ENCODE measurements at regions of chr2 and their contacts with region 1.

Region 1: GRCh38 chr2:3780477-3781402 is 77.4 kb downstream of the DCDC2C start:
- DNase-seq: peak; percentile 87
- H3K4me3 Mint-ChIP-seq: peak overlapping the region; percentile 38
- H3K27ac Mint-ChIP-seq: no peak overlapping the region
- H3K4me1 Mint-ChIP-seq: peaks cover 12% of the 10 kb centered on the region
- H3K27me3 Mint-ChIP-seq: peaks cover 33% of the 10 kb centered on the region

Region 2: DNA sequence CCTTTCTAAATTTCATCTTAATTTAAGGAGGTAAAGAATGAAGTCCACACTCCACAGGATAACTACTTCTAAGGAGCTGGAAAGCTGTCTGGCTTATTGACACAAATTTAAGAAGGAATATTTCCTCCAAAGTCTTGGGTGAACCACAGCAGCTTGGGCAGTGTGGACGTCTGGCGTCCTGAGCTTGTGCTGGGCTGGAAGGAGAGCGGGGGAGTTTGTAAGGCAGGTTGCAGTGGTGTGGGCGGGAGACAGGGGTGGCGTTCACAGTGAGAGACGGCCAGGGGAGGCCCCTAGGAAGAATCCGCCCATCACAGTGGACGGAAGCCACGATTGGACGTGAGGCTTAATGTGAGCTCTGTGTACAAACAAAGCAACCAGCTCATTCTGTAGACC is 287.1 kb before region 1 on chr2:
- CTCF ChIA-PET with region 1: no interaction called
- intact Hi-C with region 1: no loop called
- DNase-seq: no peak
- H3K4me3 Mint-ChIP-seq: no peak overlapping the region
- H3K27ac Mint-ChIP-seq: no peak overlapping the region
- H3K4me1 Mint-ChIP-seq: no peaks in the 10 kb centered on the region
- H3K27me3 Mint-ChIP-seq: no peaks in the 10 kb centered on the region

Region 3: DNA sequence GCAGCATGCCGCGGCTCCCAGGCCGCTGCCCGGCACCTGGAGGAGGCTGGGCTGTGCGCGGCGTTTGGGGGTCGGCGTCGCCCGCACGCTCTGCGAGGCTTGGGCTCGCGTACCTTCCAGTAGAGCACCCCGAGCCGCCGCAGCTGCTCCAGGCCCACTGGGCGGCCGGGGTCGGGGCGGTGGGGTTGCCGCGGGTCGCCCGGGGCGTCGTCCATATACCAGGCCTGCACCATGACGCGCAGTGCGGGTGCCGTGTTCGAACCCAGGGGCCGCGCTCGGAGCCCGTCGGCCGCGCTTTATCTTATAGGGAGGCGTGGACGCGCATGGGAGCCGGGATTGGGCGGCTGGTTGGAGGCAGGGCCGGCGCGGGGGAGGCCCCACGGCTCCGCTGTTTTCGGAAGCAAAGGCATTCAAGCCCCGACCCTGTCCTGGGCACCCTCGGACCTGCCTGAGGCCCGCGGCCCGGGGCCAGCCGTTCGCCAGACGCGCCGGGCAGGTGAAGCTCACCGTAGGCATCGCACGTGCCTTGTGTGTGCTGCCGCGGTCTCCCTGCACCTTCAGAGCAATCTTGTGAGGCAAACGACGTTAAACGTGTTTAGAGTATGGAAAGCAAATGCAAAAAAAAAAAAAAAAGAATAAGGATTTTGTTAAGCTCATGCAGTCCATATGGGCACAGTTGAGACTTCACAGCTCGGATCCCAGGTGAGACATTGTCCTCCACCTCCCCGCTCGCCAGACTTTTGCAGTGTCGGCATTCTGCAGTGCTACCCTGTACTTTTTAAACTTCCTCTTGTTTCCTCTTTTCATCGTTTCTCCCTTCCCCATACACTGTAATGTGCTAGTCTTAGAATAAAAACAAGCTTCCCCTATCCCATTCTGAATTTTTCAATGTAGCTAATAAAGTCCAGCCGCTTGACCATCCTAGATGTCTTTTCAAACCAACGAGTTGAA is 261.2 kb before region 1 on chr2 and contains the start of gene ADI1:
- CTCF ChIA-PET with region 1: no interaction called
- intact Hi-C with region 1: no loop called
- DNase-seq: peak; percentile 87
- H3K4me3 Mint-ChIP-seq: peak within 1 kb of the TSS; percentile 84
- H3K27ac Mint-ChIP-seq: peak within 1 kb of the TSS; percentile 85
- H3K4me1 Mint-ChIP-seq: peaks cover 22% of the 10 kb centered on the region
- H3K27me3 Mint-ChIP-seq: no peaks in the 10 kb centered on the region
- total RNA-seq, gene ADI1: 45.6 to 49.8 TPM

Region 4: GRCh38 chr2:3692381-3692780 is 88.4 kb before region 1 on chr2:
- CTCF ChIA-PET with region 1: interaction called, 4 read pairs
- intact Hi-C with region 1: loop called (anchors 1 kb)
- DNase-seq: no peak
- H3K4me3 Mint-ChIP-seq: no peak overlapping the region
- H3K27ac Mint-ChIP-seq: no peak overlapping the region
- H3K4me1 Mint-ChIP-seq: no peaks in the 10 kb centered on the region
- H3K27me3 Mint-ChIP-seq: peaks cover 13% of the 10 kb centered on the region

Region 5: GRCh38 chr2:3728104-3729054 is 52.4 kb before region 1 on chr2:
- CTCF ChIA-PET with region 1: interaction called, 91 read pairs
- intact Hi-C with region 1: loop called (anchors 1 kb)
- DNase-seq: no peak
- H3K4me3 Mint-ChIP-seq: no peak overlapping the region
- H3K27ac Mint-ChIP-seq: no peak overlapping the region
- H3K4me1 Mint-ChIP-seq: no peaks in the 10 kb centered on the region
- H3K27me3 Mint-ChIP-seq: peaks cover 10% of the 10 kb centered on the region

Region 6: DNA sequence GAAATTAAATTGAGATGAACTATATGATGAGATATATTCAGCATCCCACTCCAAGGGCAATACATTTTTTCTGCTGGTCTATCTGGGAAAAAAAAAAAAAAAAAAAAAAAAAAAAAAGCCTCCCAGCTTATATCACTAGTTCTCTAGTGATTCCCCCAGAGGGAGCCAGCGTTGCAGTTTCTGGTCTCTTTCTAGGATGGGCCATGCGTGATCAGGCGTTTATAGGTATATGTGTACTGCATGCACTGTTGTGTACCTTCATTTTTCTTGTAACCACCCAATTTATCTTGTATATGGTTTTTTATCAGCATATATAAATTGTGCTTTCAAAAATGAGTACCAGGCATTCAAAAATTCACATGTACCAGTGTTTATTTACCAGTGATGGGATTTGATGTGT is 42.3 kb before region 1 on chr2:
- CTCF ChIA-PET with region 1: no interaction called
- intact Hi-C with region 1: loop called (anchors 2 kb)
- DNase-seq: peak; percentile 52
- H3K4me3 Mint-ChIP-seq: no peak overlapping the region
- H3K27ac Mint-ChIP-seq: no peak overlapping the region
- H3K4me1 Mint-ChIP-seq: no peaks in the 10 kb centered on the region
- H3K27me3 Mint-ChIP-seq: peaks cover 9% of the 10 kb centered on the region

Measured in activated naive CD4-positive, alpha-beta T cell treated with anti-CD3 and anti-CD28 coated beads for 36 hours (primary cell).